Naive thymus-derived CD4-positive, alpha-beta T cell (primary cell): ENCODE measurements at regions of chr4 and their contacts with region 1.

Region 1: DNA sequence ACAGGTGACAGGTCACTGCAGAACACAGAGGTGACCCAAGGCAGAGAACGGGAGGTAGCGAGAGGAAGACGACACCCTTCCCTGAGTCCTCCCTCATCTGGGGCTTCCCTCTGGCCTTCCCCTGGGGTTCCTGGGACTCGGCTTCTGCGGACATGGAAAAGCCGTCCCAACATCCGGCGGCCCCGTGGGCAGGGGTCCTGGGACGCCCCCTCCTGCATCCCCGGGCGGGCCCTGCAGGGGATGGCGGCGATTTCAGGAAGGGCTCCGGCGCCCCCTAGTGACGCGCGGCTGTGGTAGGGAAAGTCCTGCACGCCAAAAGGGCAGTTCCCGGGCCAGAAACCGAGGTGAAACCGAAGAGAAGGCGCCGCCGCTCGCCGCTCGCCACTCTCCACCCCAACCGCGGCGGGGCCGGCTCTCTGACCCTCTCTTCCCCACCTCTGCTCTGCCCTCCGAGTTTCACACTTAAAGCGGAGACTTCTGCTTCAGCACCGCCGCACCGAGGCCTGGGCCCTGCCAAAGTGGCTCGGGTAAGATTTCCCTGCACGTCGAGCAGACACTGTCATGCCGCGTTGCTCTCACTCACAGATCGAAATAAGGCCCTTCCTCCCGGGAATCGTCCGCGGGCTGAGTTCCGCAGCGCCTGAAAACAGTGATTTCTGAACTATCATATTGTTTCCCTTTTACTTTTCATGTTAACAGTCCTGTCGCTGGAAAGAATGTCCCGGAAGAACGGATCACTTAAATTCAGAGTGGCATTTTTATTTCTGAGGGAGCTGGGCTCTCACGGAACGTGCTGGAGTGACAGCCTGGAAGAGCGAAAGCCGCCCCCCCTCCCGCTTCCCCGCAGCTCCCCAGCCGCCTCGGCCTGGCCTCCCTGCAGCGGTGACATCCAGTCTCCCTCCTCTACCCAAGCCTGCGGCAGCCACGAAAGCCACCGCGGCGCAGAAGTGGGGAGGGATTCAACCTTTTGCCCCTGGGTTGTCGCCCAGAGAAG is 110.6 kb downstream of the DCTD start:
- DNase-seq: peak in 8 of 9 donors; percentile 24 to 74 (median 45)
- ATAC-seq: peak; percentile 47
- H3K4me3 ChIP-seq: no peak overlapping the region
- H3K4me3 Mint-ChIP-seq: peak overlapping the region; percentile 64 to 93 (median 80)
- H3K27ac ChIP-seq: no peak overlapping the region
- H3K27ac Mint-ChIP-seq: peak overlapping the region in 6 of 9 donors; percentile 68 to 79 (median 72)
- H3K4me1 ChIP-seq: peaks cover 8 to 16% of the 10 kb centered on the region in 2 donors
- H3K4me1 Mint-ChIP-seq: peaks cover 0 to 20% (median 8%) of the 10 kb centered on the region in 7 donors
- H3K27me3 ChIP-seq: no peaks in the 10 kb centered on the region
- H3K27me3 Mint-ChIP-seq: peaks cover 0 to 13% (median 4%) of the 10 kb centered on the region in 5 donors

Region 2: GRCh38 chr4:181301735-181302710 is 1504.5 kb before region 1 on chr4:
- CTCF ChIA-PET with region 1: no interaction called
- POLR2A ChIA-PET with region 1: no interaction called
- intact Hi-C with region 1: loop called in 1 of 2 experiments (anchors 5 kb)
- DNase-seq: no peak
- ATAC-seq: no peak
- H3K4me3 ChIP-seq: no peak overlapping the region
- H3K4me3 Mint-ChIP-seq: no peak overlapping the region
- H3K27ac ChIP-seq: no peak overlapping the region
- H3K27ac Mint-ChIP-seq: peak overlapping the region in 1 of 9 donors; percentile 25
- H3K4me1 ChIP-seq: no peaks in the 10 kb centered on the region
- H3K4me1 Mint-ChIP-seq: no peaks in the 10 kb centered on the region
- H3K27me3 ChIP-seq: no peaks in the 10 kb centered on the region
- H3K27me3 Mint-ChIP-seq: no peaks in the 10 kb centered on the region

Region 3: DNA sequence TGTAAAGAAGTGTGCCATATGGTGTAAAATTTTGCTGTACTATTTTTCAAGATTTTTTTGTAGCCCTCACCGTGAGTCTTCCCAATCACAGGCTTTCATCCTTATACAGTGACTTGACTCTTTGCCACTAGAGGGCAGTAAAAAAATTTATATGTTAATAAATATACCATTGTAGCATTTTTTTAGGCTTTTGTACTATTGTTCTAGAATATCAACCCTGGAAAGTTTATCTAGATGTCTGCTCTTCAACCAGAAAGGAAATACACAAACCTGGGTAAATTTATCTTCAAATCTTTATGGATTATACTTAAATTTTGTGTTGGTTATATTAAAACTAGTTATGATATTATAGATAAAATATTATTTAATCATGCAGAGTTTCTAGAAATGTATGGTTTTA is 328.1 kb before region 1 on chr4:
- CTCF ChIA-PET with region 1: no interaction called
- POLR2A ChIA-PET with region 1: no interaction called
- intact Hi-C with region 1: loop called (anchors 1 kb)
- DNase-seq: peak in 6 of 9 donors; percentile 1 to 36 (median 22)
- ATAC-seq: peak; percentile 61
- H3K4me3 ChIP-seq: no peak overlapping the region
- H3K4me3 Mint-ChIP-seq: no peak overlapping the region
- H3K27ac ChIP-seq: no peak overlapping the region
- H3K27ac Mint-ChIP-seq: no peak overlapping the region
- H3K4me1 ChIP-seq: no peaks in the 10 kb centered on the region
- H3K4me1 Mint-ChIP-seq: no peaks in the 10 kb centered on the region
- H3K27me3 ChIP-seq: no peaks in the 10 kb centered on the region
- H3K27me3 Mint-ChIP-seq: peaks cover 0 to 16% (median 8%) of the 10 kb centered on the region in 5 donors

Region 4: DNA sequence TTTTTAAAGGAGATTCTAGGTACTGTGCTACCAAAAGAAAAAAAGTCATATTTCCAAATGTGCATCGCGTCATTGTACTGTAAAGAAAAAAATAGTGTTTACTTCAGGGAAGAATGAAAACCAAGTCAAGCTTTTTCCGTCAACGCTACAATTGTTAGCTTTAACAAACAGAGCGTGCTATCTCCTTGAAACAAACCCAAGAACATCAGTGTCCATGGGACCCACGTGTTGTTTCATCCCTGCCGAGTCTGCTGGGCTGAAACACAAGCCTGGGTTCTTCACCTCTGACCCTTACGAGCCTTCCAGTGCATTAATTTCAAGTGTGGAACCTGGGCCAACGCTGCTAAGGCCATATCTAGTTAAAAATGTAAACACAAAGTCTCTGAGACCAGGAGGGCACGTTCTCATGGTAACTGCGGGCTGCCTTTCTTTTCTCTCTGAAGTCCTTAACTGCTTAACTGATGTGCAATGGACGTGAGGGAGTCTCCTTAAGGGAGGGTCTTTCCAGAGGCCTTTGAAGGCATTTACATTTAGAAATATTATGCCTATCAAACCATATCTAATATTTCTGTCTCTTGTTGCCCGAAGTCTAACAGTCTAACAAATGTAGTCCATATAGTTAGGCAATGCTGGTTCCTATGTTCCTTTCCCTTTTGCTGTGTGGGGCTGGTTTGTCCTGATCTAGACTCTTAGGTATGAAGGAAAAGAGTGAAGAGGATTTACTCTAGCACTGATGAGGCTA is 734.6 kb after region 1 on chr4:
- CTCF ChIA-PET with region 1: no interaction called
- POLR2A ChIA-PET with region 1: no interaction called
- intact Hi-C with region 1: no loop called
- DNase-seq: no peak
- ATAC-seq: no peak
- H3K4me3 ChIP-seq: no peak overlapping the region
- H3K4me3 Mint-ChIP-seq: no peak overlapping the region
- H3K27ac ChIP-seq: no peak overlapping the region
- H3K27ac Mint-ChIP-seq: no peak overlapping the region
- H3K4me1 ChIP-seq: no peaks in the 10 kb centered on the region
- H3K4me1 Mint-ChIP-seq: no peaks in the 10 kb centered on the region
- H3K27me3 ChIP-seq: no peaks in the 10 kb centered on the region
- H3K27me3 Mint-ChIP-seq: peaks cover 0 to 25% (median 14%) of the 10 kb centered on the region in 5 donors